Caco-2 (cell line): ENCODE measurements at regions of chr7 and their contacts with region 1.

Region 1: GRCh38 chr7:55073945-55074499 is 55.2 kb downstream of the EGFR start:
- DNase-seq: peak; percentile 86 to 94
- H3K4me3 ChIP-seq: peak overlapping the region; percentile 15; the same call in 1 of the 2 replicates
- H3K4me3 Mint-ChIP-seq: peak overlapping the region; percentile 71
- H3K27ac Mint-ChIP-seq: peak overlapping the region; percentile 97
- H3K4me1 ChIP-seq: peaks cover 73% of the 10 kb centered on the region
- H3K4me1 Mint-ChIP-seq: peaks cover 55% of the 10 kb centered on the region
- H3K27me3 ChIP-seq: no peaks in the 10 kb centered on the region
- H3K27me3 Mint-ChIP-seq: no peaks in the 10 kb centered on the region
- CTCF ChIP-seq: no peak

Region 2: DNA sequence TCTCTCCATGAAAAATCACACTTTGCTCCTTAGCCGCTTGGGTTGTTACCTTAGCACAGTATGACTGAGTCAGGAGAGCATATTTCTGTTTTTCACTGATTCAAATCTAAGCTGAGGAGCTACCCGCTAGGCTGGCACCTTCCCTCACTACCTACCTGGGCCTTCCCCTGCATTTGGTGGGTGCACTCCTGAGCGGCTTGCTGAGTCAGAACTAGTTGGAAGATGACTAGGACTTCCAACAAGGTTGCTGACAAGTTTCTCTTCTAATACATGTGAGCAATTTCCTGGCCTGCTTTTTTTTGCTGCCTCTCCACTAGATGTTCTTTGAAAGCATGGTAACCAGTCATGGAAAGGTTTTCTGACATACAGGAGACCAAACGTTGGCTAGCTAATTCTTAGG is 271.2 kb before region 1 on chr7:
- CTCF ChIA-PET with region 1: no interaction called
- POLR2A ChIA-PET with region 1: no interaction called
- intact Hi-C with region 1: no loop called
- DNase-seq: no peak
- H3K4me3 ChIP-seq: no peak overlapping the region
- H3K4me3 Mint-ChIP-seq: no peak overlapping the region
- H3K27ac Mint-ChIP-seq: no peak overlapping the region
- H3K4me1 ChIP-seq: no peaks in the 10 kb centered on the region
- H3K4me1 Mint-ChIP-seq: no peaks in the 10 kb centered on the region
- H3K27me3 ChIP-seq: no peaks in the 10 kb centered on the region
- H3K27me3 Mint-ChIP-seq: peaks cover 9% of the 10 kb centered on the region
- CTCF ChIP-seq: no peak

Region 3: GRCh38 chr7:55048221-55048859 is 25.7 kb before region 1 on chr7:
- CTCF ChIA-PET with region 1: no interaction called
- POLR2A ChIA-PET with region 1: no interaction called
- intact Hi-C with region 1: no loop called
- DNase-seq: no peak
- H3K4me3 ChIP-seq: no peak overlapping the region
- H3K4me3 Mint-ChIP-seq: no peak overlapping the region
- H3K27ac Mint-ChIP-seq: no peak overlapping the region
- H3K4me1 ChIP-seq: peaks cover 34% of the 10 kb centered on the region
- H3K4me1 Mint-ChIP-seq: peaks cover 4% of the 10 kb centered on the region
- H3K27me3 ChIP-seq: no peaks in the 10 kb centered on the region
- H3K27me3 Mint-ChIP-seq: no peaks in the 10 kb centered on the region
- CTCF ChIP-seq: no peak

Region 4: DNA sequence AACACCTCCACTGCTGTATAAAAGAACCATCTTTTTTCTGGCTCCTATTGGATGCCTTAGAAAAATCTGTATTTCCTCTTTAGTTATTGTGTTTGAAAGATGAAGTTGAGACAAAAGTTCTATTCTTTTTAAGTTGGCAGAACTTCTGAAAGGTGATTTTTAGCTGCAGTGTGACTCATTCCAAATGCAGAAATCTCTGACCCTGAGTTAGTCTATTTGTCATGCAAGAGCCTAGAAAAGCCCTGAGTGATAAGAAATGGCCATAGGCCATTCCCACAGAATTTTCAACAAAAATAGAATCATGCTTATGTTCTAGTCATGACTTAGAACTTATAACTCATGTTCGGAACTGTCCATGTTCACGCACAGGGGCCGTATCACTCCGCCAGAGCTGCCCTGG is 33.9 kb after region 1 on chr7:
- CTCF ChIA-PET with region 1: no interaction called
- POLR2A ChIA-PET with region 1: no interaction called
- intact Hi-C with region 1: loop called (anchors 1 kb)
- DNase-seq: no peak
- H3K4me3 ChIP-seq: no peak overlapping the region
- H3K4me3 Mint-ChIP-seq: no peak overlapping the region
- H3K27ac Mint-ChIP-seq: no peak overlapping the region
- H3K4me1 ChIP-seq: peaks cover 7% of the 10 kb centered on the region; the same call in 1 of the 2 replicates
- H3K4me1 Mint-ChIP-seq: peaks cover 10% of the 10 kb centered on the region
- H3K27me3 ChIP-seq: no peaks in the 10 kb centered on the region
- H3K27me3 Mint-ChIP-seq: no peaks in the 10 kb centered on the region
- CTCF ChIP-seq: no peak

Region 5: GRCh38 chr7:55140221-55140940 is 66.4 kb after region 1 on chr7:
- CTCF ChIA-PET with region 1: no interaction called
- POLR2A ChIA-PET with region 1: no interaction called
- intact Hi-C with region 1: loop called (anchors 5 kb)
- DNase-seq: no peak
- H3K4me3 ChIP-seq: no peak overlapping the region
- H3K4me3 Mint-ChIP-seq: no peak overlapping the region
- H3K27ac Mint-ChIP-seq: no peak overlapping the region
- H3K4me1 ChIP-seq: no peaks in the 10 kb centered on the region; the same call in 1 of the 2 replicates
- H3K4me1 Mint-ChIP-seq: no peaks in the 10 kb centered on the region
- H3K27me3 ChIP-seq: no peaks in the 10 kb centered on the region
- H3K27me3 Mint-ChIP-seq: no peaks in the 10 kb centered on the region
- CTCF ChIP-seq: no peak

Region 6: GRCh38 chr7:55185941-55186609 is 112.1 kb after region 1 on chr7:
- CTCF ChIA-PET with region 1: no interaction called
- POLR2A ChIA-PET with region 1: no interaction called
- intact Hi-C with region 1: loop called (anchors 2 kb)
- DNase-seq: peak; percentile 42 to 76
- H3K4me3 ChIP-seq: no peak overlapping the region
- H3K4me3 Mint-ChIP-seq: peak overlapping the region; percentile 91
- H3K27ac Mint-ChIP-seq: peak overlapping the region; percentile 85
- H3K4me1 ChIP-seq: peaks cover 77% of the 10 kb centered on the region
- H3K4me1 Mint-ChIP-seq: peaks cover 65% of the 10 kb centered on the region
- H3K27me3 ChIP-seq: no peaks in the 10 kb centered on the region
- H3K27me3 Mint-ChIP-seq: no peaks in the 10 kb centered on the region
- CTCF ChIP-seq: no peak